ENCODE measurements at regions of chr7 and their contacts with region 1.

Region 1: GRCh38 chr7:129835569-129835968 is 117.2 kb downstream of the UBE2H start:
- DNase-seq: no peak
- H3K4me3 ChIP-seq: no peak overlapping the region
- H3K27ac ChIP-seq: peak overlapping the region in 2 of 8 donors; percentile 0 to 3
- H3K4me1 ChIP-seq: peaks cover 0 to 29% (median 8%) of the 10 kb centered on the region in 6 donors
- H3K27me3 ChIP-seq: no peaks in the 10 kb centered on the region
- CTCF ChIP-seq: no peak
- POLR2A ChIP-seq: no peak

Region 2: DNA sequence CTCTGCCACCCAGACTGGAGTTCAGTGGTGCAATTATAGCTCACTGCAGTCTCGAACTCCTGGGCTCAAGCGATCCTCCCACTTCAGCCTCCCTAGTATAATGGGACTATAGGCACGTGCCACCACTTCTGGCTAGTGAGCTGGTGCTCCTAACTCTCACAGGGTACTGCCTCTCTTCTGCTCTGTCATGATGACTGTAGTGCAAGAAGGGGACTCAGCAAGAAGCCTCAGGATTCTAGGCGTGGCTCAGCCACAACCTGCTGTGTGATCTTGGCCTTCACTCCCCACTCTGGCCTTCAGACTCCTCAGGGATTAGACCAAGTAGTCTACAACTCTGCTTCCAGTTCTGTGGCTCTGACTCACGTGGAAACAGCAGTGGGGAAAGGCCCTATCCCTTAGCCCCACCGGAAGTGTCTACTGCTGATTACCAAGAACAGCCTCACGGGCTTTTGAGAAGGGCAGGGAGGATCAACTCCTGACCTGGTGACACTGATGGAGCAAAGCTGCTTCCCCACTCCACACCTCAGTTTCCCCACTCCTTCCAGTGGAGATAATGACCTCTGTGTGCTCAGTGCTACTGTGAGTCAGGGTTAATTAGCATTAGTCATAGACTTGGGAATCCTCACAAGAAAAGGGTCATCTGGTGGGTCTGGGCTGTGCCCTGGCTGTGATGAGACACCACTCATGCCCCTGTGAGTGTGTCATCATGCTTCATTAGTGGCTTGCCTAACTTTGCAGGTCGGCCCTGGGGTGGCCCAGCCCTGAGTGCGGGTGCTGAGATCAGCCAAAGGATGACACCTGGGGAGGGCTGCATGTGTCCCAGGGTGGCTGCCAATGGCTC is 174.5 kb after region 1 on chr7:
- intact Hi-C with region 1: loop called (anchors 5 kb)
- DNase-seq: peak; percentile 72
- H3K4me3 ChIP-seq: no peak overlapping the region
- H3K27ac ChIP-seq: peak overlapping the region in 3 of 8 donors; percentile 10 to 37 (median 32)
- H3K4me1 ChIP-seq: peaks cover 4 to 26% (median 12%) of the 10 kb centered on the region in 6 donors
- H3K27me3 ChIP-seq: no peaks in the 10 kb centered on the region
- CTCF ChIP-seq: no peak
- POLR2A ChIP-seq: no peak

Region 3: GRCh38 chr7:130063036-130063435 is 227.5 kb after region 1 on chr7:
- intact Hi-C with region 1: no loop called
- DNase-seq: peak; percentile 86
- H3K4me3 ChIP-seq: no peak overlapping the region
- H3K27ac ChIP-seq: no peak overlapping the region
- H3K4me1 ChIP-seq: peaks cover 0 to 6% (median 0%) of the 10 kb centered on the region in 6 donors
- H3K27me3 ChIP-seq: no peaks in the 10 kb centered on the region
- CTCF ChIP-seq: peak; percentile 6 to 80 (median 55)
- POLR2A ChIP-seq: no peak

Measured in spleen (tissue), 13 donors.